Activated CD8-positive, alpha-beta memory T cell treated with anti-CD3 and anti-CD28 coated beads, Interleukin-2, amount 10 ng/mL, durations not matched to agents 7 days and 5 days (primary cell): ENCODE measurements at regions of chr11 and their contacts with region 1.

Region 1: DNA sequence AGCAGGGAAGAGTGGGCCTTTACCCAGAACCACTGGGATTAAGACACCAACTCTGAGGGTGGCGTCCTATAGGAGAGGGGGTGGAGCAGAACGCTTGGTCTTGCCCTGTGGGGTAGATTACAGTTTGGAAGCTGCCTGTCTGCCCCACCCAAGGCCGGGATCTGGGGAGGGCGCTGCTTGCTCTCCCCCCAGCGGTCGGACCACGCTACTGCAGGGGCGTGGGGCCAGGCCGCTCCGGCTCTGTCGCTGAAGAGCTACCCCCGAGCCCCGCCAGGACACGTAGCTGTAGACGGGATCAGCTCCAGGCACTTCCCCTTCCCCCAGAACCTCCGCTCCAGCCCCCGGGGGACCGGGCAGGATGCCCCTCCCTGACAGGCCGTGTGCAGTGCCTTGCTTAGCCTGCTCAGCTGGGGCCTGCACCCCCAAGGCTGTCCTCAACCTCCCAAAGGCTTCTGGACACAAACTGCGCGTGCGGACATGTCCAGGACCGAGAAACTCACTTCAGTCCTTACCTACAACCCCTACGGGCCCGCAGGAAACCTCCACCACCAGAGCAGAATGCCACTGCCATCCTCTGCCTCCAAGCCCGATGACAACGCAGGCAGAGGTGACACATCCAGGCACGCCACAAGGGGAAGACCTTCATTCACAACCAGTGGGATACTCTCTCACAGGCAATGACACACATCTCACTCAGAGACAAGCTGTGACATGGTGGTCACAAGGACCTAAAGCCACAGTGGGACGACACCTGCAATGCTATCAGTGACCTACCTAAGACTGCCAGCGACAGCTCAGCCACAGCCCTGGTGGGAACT is 3.6 kb downstream of the AHNAK start:
- DNase-seq: peak; percentile 89
- ATAC-seq: peak; percentile 37
- H3K4me3 Mint-ChIP-seq: peak overlapping the region; percentile 98
- H3K27ac Mint-ChIP-seq: peak overlapping the region; percentile 89
- H3K4me1 Mint-ChIP-seq: peaks cover 70% of the 10 kb centered on the region
- H3K27me3 Mint-ChIP-seq: peaks cover 6% of the 10 kb centered on the region

Region 2: GRCh38 chr11:62400760-62401159 is 142.2 kb before region 1 on chr11:
- CTCF ChIA-PET with region 1: interaction called, 69 read pairs
- DNase-seq: no peak
- ATAC-seq: no peak
- H3K4me3 Mint-ChIP-seq: no peak overlapping the region
- H3K27ac Mint-ChIP-seq: no peak overlapping the region
- H3K4me1 Mint-ChIP-seq: peaks cover 22% of the 10 kb centered on the region
- H3K27me3 Mint-ChIP-seq: no peaks in the 10 kb centered on the region

Region 3: GRCh38 chr11:62567018-62567633 is 24.2 kb after region 1 on chr11:
- CTCF ChIA-PET with region 1: interaction called, 354 read pairs
- DNase-seq: no peak
- ATAC-seq: peak; percentile 54
- H3K4me3 Mint-ChIP-seq: no peak overlapping the region
- H3K27ac Mint-ChIP-seq: peak overlapping the region; percentile 86
- H3K4me1 Mint-ChIP-seq: peaks cover 67% of the 10 kb centered on the region
- H3K27me3 Mint-ChIP-seq: no peaks in the 10 kb centered on the region

Region 4: DNA sequence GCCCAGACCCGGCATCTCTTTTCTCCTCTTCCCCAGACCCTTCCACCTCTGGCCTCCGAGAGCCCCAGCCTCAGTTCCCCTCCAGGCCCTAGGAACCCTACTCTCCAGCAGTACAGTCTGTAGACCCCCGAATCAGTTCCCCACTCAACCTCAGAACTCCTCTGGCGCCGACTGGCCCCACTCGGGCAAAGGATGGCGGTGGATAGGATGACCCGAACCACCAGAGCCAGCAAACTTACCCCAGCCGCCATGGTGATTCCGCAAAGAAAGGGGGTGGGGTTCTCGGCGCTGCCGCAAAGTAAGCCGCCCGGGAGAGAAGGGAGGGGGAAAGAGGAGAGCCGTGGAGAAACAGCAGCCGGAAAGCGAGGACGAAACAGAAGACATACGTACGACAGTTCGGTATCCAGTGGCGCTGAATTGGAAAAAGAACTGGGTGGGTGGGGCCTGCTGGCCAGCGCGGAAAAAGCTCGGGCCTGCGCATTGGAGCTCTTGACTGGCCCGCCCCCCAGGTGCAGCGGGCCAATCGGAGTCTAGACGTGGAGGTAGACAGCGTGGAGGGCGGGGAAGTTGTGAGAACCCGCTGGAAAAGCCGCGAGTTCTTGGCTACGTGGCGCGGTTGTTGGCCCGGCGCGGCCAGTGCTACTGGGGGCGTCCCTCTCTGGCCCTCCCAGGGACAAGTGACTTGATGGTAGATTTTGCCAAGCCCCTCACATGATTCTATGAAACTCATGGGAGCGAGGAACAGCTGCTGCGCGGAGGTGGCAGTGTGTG is 30.8 kb after region 1 on chr11 and contains the start of gene EEF1G:
- CTCF ChIA-PET with region 1: interaction called, 44 read pairs
- DNase-seq: peak; percentile 100
- ATAC-seq: peak; percentile 94
- H3K4me3 Mint-ChIP-seq: peak within 1 kb of the TSS; percentile 94
- H3K27ac Mint-ChIP-seq: peak within 1 kb of the TSS; percentile 89
- H3K4me1 Mint-ChIP-seq: peaks cover 51% of the 10 kb centered on the region
- H3K27me3 Mint-ChIP-seq: no peaks in the 10 kb centered on the region
- total RNA-seq, gene EEF1G: 878 to 1,201 TPM

Region 5: GRCh38 chr11:63099555-63099954 is 556.6 kb after region 1 on chr11:
- CTCF ChIA-PET with region 1: no interaction called
- DNase-seq: no peak
- ATAC-seq: no peak
- H3K4me3 Mint-ChIP-seq: no peak overlapping the region
- H3K27ac Mint-ChIP-seq: no peak overlapping the region
- H3K4me1 Mint-ChIP-seq: no peaks in the 10 kb centered on the region
- H3K27me3 Mint-ChIP-seq: peaks cover 2% of the 10 kb centered on the region